ENCODE measurements at regions of chr1 and their contacts with region 1.

Region 1: GRCh38 chr1:11661103-11661502 is 2.9 kb upstream of the FBXO6 start:
- DNase-seq: no peak
- H3K4me3 ChIP-seq: no peak overlapping the region
- H3K4me3 Mint-ChIP-seq: no peak overlapping the region
- H3K27ac ChIP-seq: no peak overlapping the region
- H3K27ac Mint-ChIP-seq: no peak overlapping the region
- H3K4me1 ChIP-seq: peaks cover 8% of the 10 kb centered on the region
- H3K4me1 Mint-ChIP-seq: peaks cover 0 to under 1% (median 0%) of the 10 kb centered on the region in 4 donors
- H3K27me3 ChIP-seq: no peaks in the 10 kb centered on the region
- H3K27me3 Mint-ChIP-seq: no peaks in the 10 kb centered on the region

Region 2: DNA sequence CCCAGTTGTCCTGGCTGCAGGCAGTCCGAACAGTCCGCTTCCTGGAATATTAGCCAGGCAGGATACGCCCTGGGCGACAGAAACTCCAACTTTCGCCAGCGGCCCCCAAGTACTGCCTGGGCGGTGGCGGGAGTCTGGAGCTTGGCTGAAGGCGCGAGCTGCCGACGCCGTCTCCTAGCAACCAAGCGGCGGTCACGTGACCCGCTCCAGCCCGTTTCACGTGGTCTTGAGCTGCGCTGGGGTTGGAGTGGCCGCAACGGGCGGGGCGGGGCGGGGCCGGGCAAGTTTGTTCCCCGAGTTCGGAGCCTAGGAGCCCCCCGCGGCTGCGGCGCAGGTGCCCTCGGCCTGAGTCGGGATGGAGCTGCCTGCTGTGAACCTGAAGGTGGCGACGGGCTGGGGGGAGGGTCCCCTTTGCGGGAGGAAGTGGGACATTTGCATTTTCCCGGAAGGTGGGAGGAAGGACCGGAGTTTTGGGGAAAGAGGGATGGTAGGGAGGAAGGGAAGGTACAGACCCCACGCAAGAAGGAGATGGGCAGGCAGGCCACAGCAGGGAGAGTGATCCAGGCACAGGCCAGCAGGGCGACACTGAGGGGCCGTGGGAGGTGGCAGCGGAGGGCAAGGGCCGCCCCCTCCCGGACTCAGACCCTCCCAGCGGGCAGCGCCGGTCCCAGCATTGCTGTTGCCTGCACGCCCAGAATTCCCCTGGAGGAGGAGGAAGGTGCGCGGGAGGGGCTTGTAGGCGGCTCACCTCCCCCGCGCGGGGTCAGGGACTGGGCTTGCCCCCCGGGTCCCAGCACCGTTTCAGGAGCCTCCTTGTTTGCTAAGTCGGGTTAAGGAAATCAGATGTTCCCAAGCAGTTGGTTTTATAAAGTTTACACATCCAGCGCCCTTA is 75.0 kb after region 1 on chr1 and contains the start of gene AGTRAP:
- CTCF ChIA-PET with region 1: interaction called, 18 read pairs
- POLR2A ChIA-PET with region 1: interaction called, 22 read pairs
- intact Hi-C with region 1: no loop called
- DNase-seq: peak; percentile 77 to 89 (median 79)
- H3K4me3 ChIP-seq: peak within 1 kb of the TSS; percentile 84 to 93
- H3K4me3 Mint-ChIP-seq: peak within 1 kb of the TSS; percentile 89 to 97 (median 92)
- H3K27ac ChIP-seq: peak within 1 kb of the TSS; percentile 81
- H3K27ac Mint-ChIP-seq: peak within 1 kb of the TSS; percentile 44 to 93 (median 87)
- H3K4me1 ChIP-seq: peaks cover 60% of the 10 kb centered on the region
- H3K4me1 Mint-ChIP-seq: peaks cover 39 to 81% (median 56%) of the 10 kb centered on the region in 4 donors
- H3K27me3 ChIP-seq: no peaks in the 10 kb centered on the region
- H3K27me3 Mint-ChIP-seq: no peaks in the 10 kb centered on the region
- total RNA-seq, gene AGTRAP: 19.0 to 21.7 TPM

Region 3: DNA sequence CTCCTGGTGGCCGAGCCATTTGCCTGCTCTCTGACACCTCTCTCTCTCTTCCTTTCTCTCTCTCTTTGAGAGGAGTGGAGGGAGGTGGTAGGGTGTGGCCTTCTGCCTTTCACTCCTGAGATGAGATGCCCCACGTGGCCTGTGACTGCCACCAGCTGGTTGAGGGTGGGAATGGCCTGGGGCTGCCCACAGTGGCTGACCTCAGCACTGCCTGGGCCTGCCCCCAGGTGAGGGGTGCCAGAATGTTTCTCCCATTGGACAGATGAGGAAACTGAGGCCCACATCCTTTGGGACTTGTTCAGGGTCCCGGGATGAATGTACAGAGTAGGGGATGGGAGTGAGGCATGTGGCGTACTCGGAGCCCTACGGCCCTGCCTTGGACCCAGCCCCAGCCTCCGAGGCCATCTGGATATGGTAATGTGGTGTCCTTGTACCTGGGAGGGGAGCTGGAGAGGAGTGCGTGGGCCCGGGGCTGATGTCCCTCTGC is 88.1 kb after region 1 on chr1:
- CTCF ChIA-PET with region 1: interaction called, 11 read pairs
- POLR2A ChIA-PET with region 1: interaction called, 7 read pairs
- intact Hi-C with region 1: loop called (anchors 1 kb)
- DNase-seq: peak; percentile 38 to 64 (median 51)
- H3K4me3 ChIP-seq: no peak overlapping the region
- H3K4me3 Mint-ChIP-seq: no peak overlapping the region
- H3K27ac ChIP-seq: no peak overlapping the region
- H3K27ac Mint-ChIP-seq: peak overlapping the region in 6 of 7 donors; percentile 53 to 92 (median 86)
- H3K4me1 ChIP-seq: peaks cover 9% of the 10 kb centered on the region
- H3K4me1 Mint-ChIP-seq: peaks cover 9 to 31% (median 19%) of the 10 kb centered on the region in 4 donors
- H3K27me3 ChIP-seq: no peaks in the 10 kb centered on the region
- H3K27me3 Mint-ChIP-seq: no peaks in the 10 kb centered on the region